ENCODE measurements at regions of chr1 and their contacts with region 1.

Region 1: GRCh38 chr1:109739738-109740660 is 839 bp downstream of the GSTM3 start:
- DNase-seq: peak; percentile 81
- H3K4me3 ChIP-seq: peak overlapping the region; percentile 41 to 69 (median 42)
- H3K27ac ChIP-seq: peak overlapping the region; percentile 17
- H3K4me1 ChIP-seq: peaks cover 12% of the 10 kb centered on the region
- H3K27me3 ChIP-seq: peaks cover 0 to 1% of the 10 kb centered on the region in 2 experiments
- CTCF ChIP-seq: no peak
- POLR2A ChIP-seq: peak; percentile 67

Region 2: GRCh38 chr1:109319114-109319513 is 420.9 kb before region 1 on chr1:
- CTCF ChIA-PET with region 1: no interaction called
- POLR2A ChIA-PET with region 1: no interaction called
- dilution Hi-C with region 1: no loop called
- intact Hi-C with region 1: no loop called
- DNase-seq: no peak
- H3K4me3 ChIP-seq: no peak overlapping the region
- H3K27ac ChIP-seq: no peak overlapping the region
- H3K4me1 ChIP-seq: no peaks in the 10 kb centered on the region
- H3K27me3 ChIP-seq: no peaks in the 10 kb centered on the region
- CTCF ChIP-seq: no peak
- POLR2A ChIP-seq: no peak

Region 3: DNA sequence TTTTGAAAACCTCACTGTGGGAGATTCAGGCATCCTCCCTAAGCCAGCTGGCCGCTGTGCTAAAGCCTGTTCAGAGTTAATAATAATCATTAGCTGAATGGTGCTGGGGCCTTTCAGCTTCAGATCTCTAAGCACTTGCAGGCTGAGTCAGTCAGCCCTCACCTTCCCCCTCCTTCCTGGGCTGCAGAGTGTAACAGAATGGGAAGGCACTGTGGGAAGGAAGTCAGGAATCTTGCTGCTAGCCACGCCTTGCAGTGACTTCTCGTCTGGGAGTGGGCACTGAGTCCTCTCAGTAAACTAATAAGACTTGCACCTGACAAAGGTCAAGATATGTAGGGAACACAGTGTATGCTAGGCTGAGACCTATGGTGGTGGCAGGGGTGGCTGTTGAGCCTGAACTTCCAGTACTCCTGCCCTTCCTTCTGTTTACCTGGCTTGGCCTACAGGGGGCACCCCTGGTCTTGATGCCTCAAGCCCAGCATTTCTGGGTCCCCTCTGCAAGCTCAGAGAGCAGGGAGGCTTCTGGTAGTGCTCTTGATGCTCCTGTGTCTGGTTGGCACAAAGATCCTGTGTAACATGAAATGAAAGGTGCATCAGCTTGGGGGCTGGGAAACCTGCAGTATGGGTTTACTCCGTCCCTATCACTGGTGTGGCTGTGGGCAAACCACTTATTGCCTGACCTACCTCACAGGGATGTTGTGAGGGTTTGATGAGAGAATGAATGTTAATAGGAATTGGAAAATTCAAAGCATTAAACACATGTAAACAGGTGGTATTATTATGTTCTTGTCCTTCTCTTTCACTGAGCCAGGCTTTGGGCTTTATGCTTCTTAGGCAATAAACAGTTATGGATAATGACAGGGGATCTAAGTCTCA is 240.1 kb before region 1 on chr1:
- CTCF ChIA-PET with region 1: no interaction called
- POLR2A ChIA-PET with region 1: no interaction called
- dilution Hi-C with region 1: no loop called
- intact Hi-C with region 1: loop called (anchors 5 kb)
- DNase-seq: peak; percentile 28
- H3K4me3 ChIP-seq: no peak overlapping the region
- H3K27ac ChIP-seq: no peak overlapping the region
- H3K4me1 ChIP-seq: peaks cover 7% of the 10 kb centered on the region
- H3K27me3 ChIP-seq: no peaks in the 10 kb centered on the region
- CTCF ChIP-seq: peak; percentile 51 to 60
- POLR2A ChIP-seq: no peak

Region 4: DNA sequence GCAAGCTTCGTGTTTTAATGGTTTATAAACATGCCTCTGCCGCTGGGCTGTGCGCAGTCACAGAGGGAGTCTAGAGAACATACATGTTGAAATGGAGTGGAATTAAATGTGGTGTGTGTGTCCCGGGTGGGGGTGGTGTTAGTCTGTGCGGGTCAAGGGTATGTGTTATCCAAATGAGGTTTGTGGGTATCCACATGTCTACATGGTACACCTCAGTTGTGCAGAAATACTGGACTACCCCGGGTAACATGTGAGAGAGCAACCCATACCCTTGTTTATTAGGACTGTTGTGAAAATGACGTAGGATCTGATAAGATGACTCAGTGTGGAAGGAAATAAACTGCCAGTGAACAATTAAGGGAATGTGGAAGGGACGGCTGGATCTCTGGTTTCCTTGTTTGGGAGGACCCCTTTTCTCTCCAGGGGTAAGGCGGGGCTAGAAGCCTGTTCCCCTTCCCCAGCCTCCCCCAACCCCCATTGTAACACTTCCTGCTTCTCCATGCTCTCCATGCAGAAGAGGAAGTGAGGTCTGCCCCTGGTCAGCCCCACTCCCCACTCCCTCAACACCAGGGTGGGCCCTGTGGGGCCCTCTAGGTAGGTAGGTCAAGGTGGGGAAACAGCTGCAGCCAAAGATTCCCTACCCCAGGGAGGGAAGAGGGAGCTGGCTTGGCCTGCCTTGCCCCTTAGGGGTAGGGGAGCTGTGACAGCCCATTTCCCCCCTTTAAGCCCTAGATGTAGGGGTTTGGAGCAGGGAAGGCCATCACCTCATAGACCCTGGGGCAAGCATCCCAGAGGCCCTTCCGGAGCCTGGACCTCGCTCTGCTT is 23.0 kb after region 1 on chr1:
- CTCF ChIA-PET with region 1: interaction called, 3 read pairs
- POLR2A ChIA-PET with region 1: interaction called, 3 read pairs
- dilution Hi-C with region 1: no loop called
- intact Hi-C with region 1: loop called (anchors 2 kb)
- DNase-seq: peak; percentile 88
- H3K4me3 ChIP-seq: no peak overlapping the region
- H3K27ac ChIP-seq: peak overlapping the region; percentile 90
- H3K4me1 ChIP-seq: peaks cover 14% of the 10 kb centered on the region
- H3K27me3 ChIP-seq: no peaks in the 10 kb centered on the region
- CTCF ChIP-seq: no peak
- POLR2A ChIP-seq: peak; percentile 24

Region 5: DNA sequence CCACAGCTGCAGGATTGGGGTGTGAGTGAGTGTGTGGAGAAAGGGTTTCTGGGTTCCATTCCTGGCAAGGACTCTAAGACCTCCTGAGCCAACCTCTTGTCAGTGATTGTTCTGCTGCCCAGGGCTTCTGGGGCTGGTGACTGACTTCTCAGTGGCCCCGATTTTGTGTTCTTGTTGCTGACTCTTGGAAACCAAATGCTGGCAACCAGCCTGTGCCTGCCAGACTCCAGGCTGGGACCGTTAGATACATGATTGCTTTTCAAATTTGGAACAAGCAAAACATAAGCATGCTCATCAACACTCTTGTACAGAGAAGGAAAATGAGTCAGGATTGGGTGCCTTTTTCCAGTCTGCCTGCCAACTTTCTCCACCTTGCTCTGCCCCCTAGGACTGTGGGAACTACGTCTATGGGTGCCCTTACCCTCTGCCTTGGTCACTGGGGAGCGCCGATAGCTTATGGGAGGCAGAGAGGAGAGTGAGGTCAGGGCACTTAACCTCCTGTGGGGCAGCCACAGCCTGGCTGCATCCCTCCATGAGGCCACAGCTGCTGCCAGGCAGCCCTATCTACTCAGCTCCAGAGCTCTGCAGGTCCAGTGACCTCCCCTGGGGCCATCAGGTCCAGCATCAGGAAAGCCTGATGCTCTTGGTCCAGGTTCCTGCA is 63.0 kb after region 1 on chr1:
- CTCF ChIA-PET with region 1: no interaction called
- POLR2A ChIA-PET with region 1: no interaction called
- dilution Hi-C with region 1: no loop called
- intact Hi-C with region 1: no loop called
- DNase-seq: peak; percentile 29
- H3K4me3 ChIP-seq: no peak overlapping the region
- H3K27ac ChIP-seq: no peak overlapping the region
- H3K4me1 ChIP-seq: no peaks in the 10 kb centered on the region
- H3K27me3 ChIP-seq: peaks cover 0 to 2% of the 10 kb centered on the region in 2 experiments
- CTCF ChIP-seq: no peak
- POLR2A ChIP-seq: no peak

Region 6: GRCh38 chr1:109901524-109902145 is 161.6 kb after region 1 on chr1:
- CTCF ChIA-PET with region 1: no interaction called
- POLR2A ChIA-PET with region 1: no interaction called
- dilution Hi-C with region 1: no loop called
- intact Hi-C with region 1: no loop called
- DNase-seq: no peak
- H3K4me3 ChIP-seq: no peak overlapping the region
- H3K27ac ChIP-seq: no peak overlapping the region
- H3K4me1 ChIP-seq: peaks cover 6% of the 10 kb centered on the region
- H3K27me3 ChIP-seq: peaks cover 0 to 1% of the 10 kb centered on the region in 2 experiments
- CTCF ChIP-seq: no peak
- POLR2A ChIP-seq: no peak

Measured in endothelial cell of umbilical vein (primary cell).